CD8-positive, alpha-beta T cell (primary cell): ENCODE measurements at regions of chr21 and their contacts with region 1.

Region 1: GRCh38 chr21:43789276-43790009 is at the start of gene RRP1:
- DNase-seq: peak; percentile 89 to 99 (median 95)
- ATAC-seq: peak; percentile 98
- H3K4me3 ChIP-seq: peak within 1 kb of the TSS; percentile 82 to 94
- H3K4me3 Mint-ChIP-seq: peak within 1 kb of the TSS; percentile 91
- H3K27ac ChIP-seq: peak within 1 kb of the TSS; percentile 71 to 78
- H3K27ac Mint-ChIP-seq: peak within 1 kb of the TSS; percentile 87
- H3K4me1 ChIP-seq: peaks cover 16% of the 10 kb centered on the region
- H3K4me1 Mint-ChIP-seq: peaks cover 21% of the 10 kb centered on the region
- H3K27me3 ChIP-seq: no peaks in the 10 kb centered on the region
- H3K27me3 Mint-ChIP-seq: no peaks in the 10 kb centered on the region
- CTCF ChIP-seq: peak; percentile 97
- total RNA-seq, gene RRP1: 26.8 to 26.9 TPM

Region 2: GRCh38 chr21:42892931-42893755 is 896.3 kb before region 1 on chr21 and contains the start of gene NDUFV3:
- CTCF ChIA-PET with region 1: no interaction called
- POLR2A ChIA-PET with region 1: no interaction called
- intact Hi-C with region 1: loop called in 1 of 2 experiments (anchors 5 kb)
- DNase-seq: peak; percentile 100
- ATAC-seq: peak; percentile 96
- H3K4me3 ChIP-seq: peak within 1 kb of the TSS; percentile 70 to 94
- H3K4me3 Mint-ChIP-seq: peak within 1 kb of the TSS; percentile 85
- H3K27ac ChIP-seq: peak within 1 kb of the TSS; percentile 92 to 93
- H3K27ac Mint-ChIP-seq: peak within 1 kb of the TSS; percentile 98
- H3K4me1 ChIP-seq: peaks cover 14% of the 10 kb centered on the region
- H3K4me1 Mint-ChIP-seq: peaks cover 23% of the 10 kb centered on the region
- H3K27me3 ChIP-seq: no peaks in the 10 kb centered on the region
- H3K27me3 Mint-ChIP-seq: no peaks in the 10 kb centered on the region
- CTCF ChIP-seq: no peak
- total RNA-seq, gene NDUFV3: 18.0 to 18.2 TPM

Region 3: DNA sequence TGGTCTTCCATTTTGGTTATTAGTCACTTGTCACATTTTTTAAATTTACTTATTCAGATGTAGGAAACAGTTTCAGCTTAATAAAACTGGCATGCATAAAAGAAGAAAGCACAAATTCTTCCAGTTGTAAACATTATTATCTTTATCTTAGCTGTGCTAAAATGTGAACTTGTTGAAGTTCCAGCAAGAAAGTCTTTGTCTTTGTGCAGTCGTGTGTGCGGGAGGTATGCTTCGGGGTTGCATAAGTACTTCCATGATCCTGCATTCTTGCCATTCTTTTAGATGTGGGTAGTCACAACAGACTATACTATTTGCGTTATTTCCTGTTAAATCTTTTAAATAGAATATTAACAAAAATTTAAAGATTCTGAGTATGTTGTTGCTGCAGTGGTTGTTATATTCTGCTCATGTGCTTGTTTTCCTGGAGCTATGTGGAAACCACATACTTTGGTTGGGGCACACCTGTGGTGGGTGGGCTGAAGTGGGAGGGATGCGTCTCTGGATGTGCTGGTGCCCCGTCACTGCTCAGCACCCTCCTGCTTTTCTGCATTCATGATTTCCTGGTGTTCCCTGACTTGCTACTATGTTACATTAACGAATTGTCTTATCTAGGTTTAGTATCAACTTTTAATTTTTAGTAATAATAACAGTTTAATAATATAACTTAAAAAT is 763.7 kb before region 1 on chr21:
- CTCF ChIA-PET with region 1: no interaction called
- POLR2A ChIA-PET with region 1: no interaction called
- intact Hi-C with region 1: no loop called
- DNase-seq: no peak
- ATAC-seq: no peak
- H3K4me3 ChIP-seq: no peak overlapping the region
- H3K4me3 Mint-ChIP-seq: no peak overlapping the region
- H3K27ac ChIP-seq: no peak overlapping the region
- H3K27ac Mint-ChIP-seq: no peak overlapping the region
- H3K4me1 ChIP-seq: no peaks in the 10 kb centered on the region
- H3K4me1 Mint-ChIP-seq: no peaks in the 10 kb centered on the region
- H3K27me3 ChIP-seq: no peaks in the 10 kb centered on the region
- H3K27me3 Mint-ChIP-seq: no peaks in the 10 kb centered on the region
- CTCF ChIP-seq: no peak

Region 4: GRCh38 chr21:43667191-43667904 is 122.1 kb before region 1 on chr21:
- CTCF ChIA-PET with region 1: no interaction called
- POLR2A ChIA-PET with region 1: no interaction called
- intact Hi-C with region 1: loop called in 1 of 2 experiments (anchors 10 kb)
- DNase-seq: no peak
- ATAC-seq: no peak
- H3K4me3 ChIP-seq: no peak overlapping the region
- H3K4me3 Mint-ChIP-seq: no peak overlapping the region
- H3K27ac ChIP-seq: no peak overlapping the region
- H3K27ac Mint-ChIP-seq: no peak overlapping the region
- H3K4me1 ChIP-seq: peaks cover 9% of the 10 kb centered on the region
- H3K4me1 Mint-ChIP-seq: peaks cover 54% of the 10 kb centered on the region
- H3K27me3 ChIP-seq: no peaks in the 10 kb centered on the region
- H3K27me3 Mint-ChIP-seq: no peaks in the 10 kb centered on the region
- CTCF ChIP-seq: no peak

Region 5: GRCh38 chr21:43728467-43729390 is 60.7 kb before region 1 on chr21:
- CTCF ChIA-PET with region 1: no interaction called
- POLR2A ChIA-PET with region 1: interaction called, 6 read pairs
- intact Hi-C with region 1: loop called in 1 of 2 experiments (anchors 1 kb)
- DNase-seq: peak; percentile 57 to 94 (median 76)
- ATAC-seq: peak; percentile 88
- H3K4me3 ChIP-seq: peak overlapping the region; percentile 44 to 58
- H3K4me3 Mint-ChIP-seq: peak overlapping the region; percentile 87
- H3K27ac ChIP-seq: peak overlapping the region in 1 of 2 experiments; percentile 81
- H3K27ac Mint-ChIP-seq: peak overlapping the region; percentile 87
- H3K4me1 ChIP-seq: peaks cover 31% of the 10 kb centered on the region
- H3K4me1 Mint-ChIP-seq: peaks cover 42% of the 10 kb centered on the region
- H3K27me3 ChIP-seq: no peaks in the 10 kb centered on the region
- H3K27me3 Mint-ChIP-seq: no peaks in the 10 kb centered on the region
- CTCF ChIP-seq: peak; percentile 22

Region 6: DNA sequence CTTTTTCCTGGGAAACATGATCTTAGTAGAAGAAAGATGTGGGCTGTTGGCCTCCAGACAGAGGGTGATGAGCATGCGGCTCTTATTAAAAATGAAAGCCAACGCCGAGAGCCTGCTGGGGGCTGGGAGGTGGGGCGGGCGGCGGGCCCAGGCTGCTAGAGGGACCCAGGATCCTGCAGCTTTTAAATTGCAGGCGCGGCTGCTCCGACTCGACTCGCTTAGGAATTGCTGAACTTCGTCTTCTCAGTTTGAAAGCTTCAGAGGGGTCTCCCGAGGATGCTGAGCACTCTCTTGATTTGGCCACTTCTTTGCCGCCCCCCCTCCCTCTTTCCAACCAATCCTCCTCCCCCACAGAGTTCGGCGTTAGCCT is 76.8 kb after region 1 on chr21:
- CTCF ChIA-PET with region 1: no interaction called
- POLR2A ChIA-PET with region 1: no interaction called
- intact Hi-C with region 1: loop called in 1 of 2 experiments (anchors 2 kb)
- DNase-seq: peak in 5 of 9 experiments; percentile 21 to 65 (median 48)
- ATAC-seq: peak; percentile 37
- H3K4me3 ChIP-seq: peak overlapping the region; percentile 56 to 61
- H3K4me3 Mint-ChIP-seq: peak overlapping the region; percentile 81
- H3K27ac ChIP-seq: peak overlapping the region; percentile 45 to 64
- H3K27ac Mint-ChIP-seq: peak overlapping the region; percentile 85
- H3K4me1 ChIP-seq: peaks cover 23% of the 10 kb centered on the region
- H3K4me1 Mint-ChIP-seq: peaks cover 49% of the 10 kb centered on the region
- H3K27me3 ChIP-seq: no peaks in the 10 kb centered on the region
- H3K27me3 Mint-ChIP-seq: no peaks in the 10 kb centered on the region
- CTCF ChIP-seq: no peak

Region 7: DNA sequence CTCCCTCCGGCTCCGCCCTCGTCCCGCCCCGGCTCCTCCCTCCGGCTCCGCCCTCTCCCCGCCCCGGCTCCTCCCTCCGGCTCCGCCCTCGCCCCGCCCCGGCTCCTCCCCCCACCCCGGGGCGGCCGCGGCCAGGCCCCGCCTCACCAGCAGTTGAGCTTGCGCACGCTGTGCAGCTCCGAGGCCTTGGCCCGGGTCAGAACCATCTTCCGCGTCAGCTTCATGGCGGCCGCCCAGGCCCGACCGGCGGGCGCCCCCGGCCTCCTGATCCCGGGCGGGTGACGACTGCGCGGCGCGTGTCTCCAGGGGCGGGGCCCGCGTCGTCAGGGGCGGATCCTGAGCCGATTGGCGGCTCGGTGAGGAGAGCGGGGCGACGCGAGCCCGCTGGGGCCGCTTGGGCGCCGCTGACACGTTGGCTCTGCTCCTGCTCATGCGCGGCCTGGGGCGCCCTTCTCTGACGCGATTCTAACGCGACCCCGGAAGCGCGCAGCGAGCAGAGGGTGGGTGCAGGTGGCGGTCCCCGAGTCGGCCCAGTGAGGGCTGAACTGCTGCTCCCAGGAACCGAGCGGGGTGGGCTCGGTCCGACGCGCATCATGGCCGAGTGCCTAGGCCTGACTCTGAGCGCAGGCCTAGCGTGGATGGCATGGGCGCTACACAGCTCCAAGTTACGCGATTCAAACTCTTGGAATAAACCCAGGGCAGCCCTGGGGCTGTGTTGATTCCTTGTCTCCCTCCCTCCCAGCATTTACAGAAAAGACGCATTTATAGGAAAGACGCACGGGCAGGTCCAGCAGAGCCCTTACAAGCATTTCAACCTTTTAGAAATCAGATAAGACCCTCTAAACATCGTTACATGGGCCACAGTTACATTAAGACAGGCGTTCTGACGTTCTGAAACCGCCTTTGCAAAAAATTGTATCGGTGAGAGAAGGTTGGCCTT is 549.8 kb after region 1 on chr21 and contains the start of gene CFAP410:
- CTCF ChIA-PET with region 1: no interaction called
- POLR2A ChIA-PET with region 1: no interaction called
- intact Hi-C with region 1: loop called in 1 of 2 experiments (anchors 1 kb)
- DNase-seq: peak; percentile 89 to 98 (median 95)
- ATAC-seq: peak; percentile 84
- H3K4me3 ChIP-seq: peak within 1 kb of the TSS; percentile 73 to 76
- H3K4me3 Mint-ChIP-seq: peak within 1 kb of the TSS; percentile 94
- H3K27ac ChIP-seq: peak within 1 kb of the TSS; percentile 92 to 96
- H3K27ac Mint-ChIP-seq: peak within 1 kb of the TSS; percentile 99
- H3K4me1 ChIP-seq: peaks cover 17% of the 10 kb centered on the region
- H3K4me1 Mint-ChIP-seq: peaks cover 32% of the 10 kb centered on the region
- H3K27me3 ChIP-seq: no peaks in the 10 kb centered on the region
- H3K27me3 Mint-ChIP-seq: no peaks in the 10 kb centered on the region
- CTCF ChIP-seq: no peak
- total RNA-seq, gene CFAP410: 69.7 to 70.5 TPM